ENCODE measurements at regions of chr5 and their contacts with region 1.

Region 1: DNA sequence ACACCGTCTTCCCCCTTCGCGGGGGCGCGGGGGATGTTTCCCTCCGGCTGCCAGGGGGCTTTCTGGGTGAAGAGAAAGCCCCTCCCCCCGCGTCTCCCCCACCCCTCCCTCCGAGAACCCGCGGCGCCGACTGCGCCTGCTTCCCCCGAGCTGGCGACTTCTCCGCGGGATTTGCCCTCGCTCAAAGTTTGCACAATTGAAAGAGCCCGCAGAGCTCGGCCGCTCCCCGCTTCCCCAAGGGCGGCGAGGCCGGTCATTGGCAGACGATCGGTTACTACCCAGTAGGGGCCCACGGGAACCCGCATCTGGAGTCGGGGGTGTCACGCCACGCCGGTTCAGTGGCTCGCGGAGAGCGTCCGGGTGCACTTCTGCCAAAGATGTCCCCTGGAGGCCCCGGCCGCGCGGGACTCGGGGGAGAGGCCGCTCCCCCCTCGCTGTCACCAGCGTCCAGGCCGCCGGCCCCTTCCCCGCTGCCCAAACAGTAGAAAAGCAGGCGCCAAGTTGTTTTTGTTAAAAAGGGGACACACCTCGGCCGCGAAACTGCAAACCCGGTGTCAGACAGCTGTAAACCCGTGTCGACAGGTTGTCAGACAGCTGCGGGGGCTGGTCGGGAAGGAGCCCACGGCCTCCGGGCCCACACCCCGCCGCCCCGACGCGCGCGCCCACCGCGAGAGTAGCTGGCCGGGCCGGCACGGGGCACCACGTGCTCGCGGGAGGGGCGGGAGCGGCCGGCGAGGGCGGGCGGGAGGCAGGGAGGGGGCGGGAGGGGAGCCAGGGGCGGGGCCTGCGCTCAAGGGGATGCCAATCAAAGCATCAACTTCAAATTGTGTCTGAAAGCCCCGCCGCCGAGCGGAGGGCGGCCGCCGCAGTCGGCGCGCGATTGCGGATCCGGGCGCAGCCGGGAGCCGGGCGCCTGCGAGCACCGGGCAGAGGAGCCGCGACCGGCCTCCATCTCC is at the start of gene IRX1:
- DNase-seq: no peak
- H3K4me3 Mint-ChIP-seq: no peak within 1 kb of the TSS
- H3K27ac Mint-ChIP-seq: peak within 1 kb of the TSS; percentile 3
- H3K4me1 Mint-ChIP-seq: no peaks in the 10 kb centered on the region
- H3K27me3 Mint-ChIP-seq: peaks cover 61% of the 10 kb centered on the region
- total RNA-seq, gene IRX1: not detected in 2 replicates

Region 2: DNA sequence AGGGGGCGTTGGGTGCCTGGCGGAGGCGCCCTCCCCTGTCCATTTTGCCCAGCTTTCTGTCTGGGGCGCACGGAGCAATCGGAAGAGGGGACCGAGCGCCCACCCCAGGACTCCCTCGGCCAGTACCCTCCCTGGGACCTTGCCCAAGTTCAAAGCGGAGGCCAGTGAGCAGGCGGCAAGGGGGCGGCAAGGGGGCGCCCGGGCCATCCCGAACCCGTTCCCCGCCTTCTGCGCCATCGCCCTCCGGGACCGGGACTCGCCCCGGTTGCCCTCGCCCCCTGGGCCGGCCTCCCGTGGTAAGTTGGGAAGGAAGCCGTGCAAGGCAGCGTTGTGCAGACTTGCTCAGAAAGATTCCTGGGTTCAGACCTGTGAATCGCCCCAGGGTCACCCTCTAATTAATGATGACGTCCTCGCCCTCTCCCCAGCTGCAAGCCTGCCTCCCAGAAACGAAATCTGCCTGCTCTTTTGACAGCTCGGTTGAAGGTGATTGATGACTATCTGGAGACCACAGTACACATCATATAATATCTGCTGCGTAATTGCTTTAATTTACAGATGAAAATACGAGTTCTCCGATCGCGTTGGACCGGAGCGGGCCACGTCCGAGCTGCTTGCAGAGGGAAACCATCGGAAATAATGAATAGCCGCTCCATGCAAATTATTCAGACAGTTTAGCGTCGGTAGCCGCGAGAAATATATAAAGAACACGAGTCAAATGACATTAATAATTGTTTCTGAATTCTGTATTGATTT is 1711.2 kb before region 1 on chr5:
- intact Hi-C with region 1: loop called (anchors 5 kb)
- DNase-seq: no peak
- H3K4me3 Mint-ChIP-seq: no peak overlapping the region
- H3K27ac Mint-ChIP-seq: peak overlapping the region; percentile 66
- H3K4me1 Mint-ChIP-seq: no peaks in the 10 kb centered on the region
- H3K27me3 Mint-ChIP-seq: peaks cover 46% of the 10 kb centered on the region

Region 3: DNA sequence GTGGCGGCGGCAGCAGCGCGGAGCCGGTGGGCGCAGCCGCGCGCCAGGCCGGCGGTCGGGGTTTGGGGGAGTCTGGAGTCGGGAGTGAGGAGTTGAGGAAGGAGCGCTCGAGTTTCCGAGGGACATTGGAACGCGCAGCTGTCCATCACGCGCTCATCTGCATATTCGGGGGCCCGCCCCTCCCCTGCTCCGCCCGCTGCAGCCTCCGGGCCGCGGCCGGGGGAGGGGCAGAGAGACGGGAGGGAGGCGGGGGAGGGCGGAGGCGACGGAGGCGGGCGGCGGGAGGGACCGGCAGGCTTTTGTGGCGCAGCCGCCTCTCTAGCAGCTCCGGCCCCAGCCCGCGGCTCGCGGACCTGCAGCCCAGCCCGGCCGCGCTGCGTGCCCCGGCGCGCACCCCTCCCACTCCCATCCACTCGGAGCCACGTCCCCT is 843.7 kb before region 1 on chr5 and contains the start of gene IRX2:
- intact Hi-C with region 1: loop called (anchors 5 kb)
- DNase-seq: no peak
- H3K4me3 Mint-ChIP-seq: no peak within 1 kb of the TSS
- H3K27ac Mint-ChIP-seq: peak within 1 kb of the TSS; percentile 74
- H3K4me1 Mint-ChIP-seq: no peaks in the 10 kb centered on the region
- H3K27me3 Mint-ChIP-seq: peaks cover 53% of the 10 kb centered on the region
- total RNA-seq, gene IRX2: not detected in 2 replicates

Region 4: DNA sequence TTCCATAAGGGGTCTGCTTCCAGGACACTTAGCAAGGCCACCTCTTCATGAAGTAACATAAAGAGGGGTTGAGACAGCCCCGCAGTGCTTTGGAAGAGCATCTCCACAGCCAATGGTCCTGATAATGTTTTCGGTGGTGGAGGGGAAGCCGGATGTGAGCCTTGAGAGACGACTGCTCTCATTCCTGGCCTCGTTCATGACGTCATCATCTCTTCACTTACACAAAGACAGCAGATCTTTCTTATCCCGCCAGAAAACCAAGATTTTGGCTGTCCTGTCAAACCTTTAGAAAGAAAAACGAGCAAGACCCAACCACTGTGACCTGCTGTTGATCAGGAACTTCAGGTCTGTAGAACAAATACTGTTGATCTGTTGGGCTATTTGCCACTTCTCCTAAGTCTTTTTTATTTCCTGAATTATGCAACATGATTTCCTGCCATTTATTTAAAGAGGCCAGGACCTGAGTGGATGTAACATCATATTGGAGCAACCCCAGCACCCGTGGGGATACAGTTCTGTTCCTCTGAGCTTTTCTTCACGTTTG is 754.8 kb before region 1 on chr5:
- intact Hi-C with region 1: no loop called
- DNase-seq: no peak
- H3K4me3 Mint-ChIP-seq: no peak overlapping the region
- H3K27ac Mint-ChIP-seq: no peak overlapping the region
- H3K4me1 Mint-ChIP-seq: no peaks in the 10 kb centered on the region
- H3K27me3 Mint-ChIP-seq: no peaks in the 10 kb centered on the region